Endothelial cell of umbilical vein (primary cell): ENCODE measurements at regions of chr3 and their contacts with region 1.

Region 1: DNA sequence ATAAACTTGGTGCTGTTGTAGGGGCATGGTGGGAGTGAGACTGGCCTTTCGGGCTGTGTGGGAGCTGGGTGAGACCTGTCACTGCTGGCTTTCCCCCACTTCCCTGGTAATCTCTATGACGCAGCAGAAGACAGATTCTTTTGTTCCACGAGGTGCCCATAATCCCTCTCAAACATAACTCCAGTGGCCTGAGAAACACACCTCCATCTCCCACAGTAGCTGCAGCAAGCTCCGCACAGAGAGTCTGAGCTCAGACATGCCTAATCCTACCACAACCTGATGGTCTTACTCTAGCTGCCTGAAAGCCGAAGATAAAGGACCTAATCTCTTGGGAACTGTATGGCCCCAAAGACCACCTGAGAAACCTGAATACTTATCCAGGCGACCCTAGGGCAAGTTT is 225.6 kb upstream of the CRBN start:
- DNase-seq: no peak
- H3K4me3 ChIP-seq: no peak overlapping the region
- H3K27ac ChIP-seq: no peak overlapping the region
- H3K4me1 ChIP-seq: no peaks in the 10 kb centered on the region
- H3K27me3 ChIP-seq: no peaks in the 10 kb centered on the region
- CTCF ChIP-seq: no peak
- POLR2A ChIP-seq: no peak

Region 2: DNA sequence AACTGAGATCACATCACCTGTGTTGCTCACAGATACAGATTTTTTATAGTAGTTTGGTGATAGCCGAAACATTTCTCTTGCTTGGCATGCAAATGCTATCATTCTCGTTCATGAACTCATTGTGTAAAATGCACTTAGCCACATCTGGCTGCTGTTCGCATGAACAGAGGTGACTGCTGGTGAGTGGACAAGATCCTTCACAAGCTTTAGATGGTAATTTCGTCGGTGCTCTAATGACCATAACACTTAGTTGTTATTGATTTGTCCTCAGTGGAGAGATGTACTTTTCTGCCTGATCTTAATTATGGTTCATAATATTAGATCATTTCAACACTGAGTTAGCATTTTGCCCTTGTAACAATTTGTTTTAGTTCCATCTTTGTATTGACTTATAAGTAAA is 407.9 kb after region 1 on chr3:
- CTCF ChIA-PET with region 1: no interaction called
- POLR2A ChIA-PET with region 1: no interaction called
- dilution Hi-C with region 1: no loop called
- intact Hi-C with region 1: loop called (anchors 5 kb)
- DNase-seq: no peak
- H3K4me3 ChIP-seq: no peak overlapping the region
- H3K27ac ChIP-seq: no peak overlapping the region
- H3K4me1 ChIP-seq: no peaks in the 10 kb centered on the region
- H3K27me3 ChIP-seq: no peaks in the 10 kb centered on the region
- CTCF ChIP-seq: no peak
- POLR2A ChIP-seq: no peak